PC-3 (cell line): ENCODE measurements at regions of chr1 and their contacts with region 1.

Region 1: DNA sequence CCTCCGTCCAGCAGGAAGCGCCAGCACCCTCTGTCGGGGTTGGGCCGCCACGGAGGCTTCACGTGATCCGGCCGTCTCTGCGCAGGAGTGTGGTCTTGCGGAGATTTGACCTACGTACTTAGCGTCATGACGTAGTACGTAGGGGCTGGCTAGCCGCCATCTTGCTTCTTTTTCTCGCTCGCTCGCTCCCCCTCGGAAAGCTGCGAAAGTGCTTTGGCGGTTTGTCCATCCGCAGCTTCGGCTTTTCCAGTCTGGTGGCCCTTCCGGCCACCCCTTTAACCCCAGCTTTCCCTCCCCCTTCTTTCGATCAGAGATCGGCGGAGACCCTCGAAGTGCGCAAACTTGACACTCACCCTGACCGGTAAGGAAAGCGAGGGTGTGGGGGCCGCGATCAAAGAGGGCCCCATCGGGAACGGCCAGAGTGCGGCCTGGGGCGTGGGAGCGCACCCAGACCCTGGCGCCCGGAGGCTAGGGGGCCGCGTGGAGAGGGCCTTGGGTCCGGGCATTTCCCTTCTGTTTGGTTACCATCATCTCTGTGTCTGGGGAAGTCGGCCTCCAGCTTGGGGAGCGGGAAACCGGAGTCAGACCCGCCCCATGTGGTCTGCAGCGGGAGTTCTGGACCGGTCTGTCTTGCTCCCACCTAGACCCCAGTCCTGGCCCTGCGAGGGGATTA is at the start of gene PRRC2C:
- DNase-seq: peak; percentile 100
- ATAC-seq: peak; percentile 95
- H3K4me3 ChIP-seq: peak within 1 kb of the TSS; percentile 82
- H3K27ac ChIP-seq: peak within 1 kb of the TSS; percentile 84
- H3K4me1 ChIP-seq: peaks cover 33% of the 10 kb centered on the region
- H3K27me3 ChIP-seq: no peaks in the 10 kb centered on the region
- CTCF ChIP-seq: no peak; the same call in 1 of the 2 replicates
- total RNA-seq, gene PRRC2C: 199 and 225 TPM in 2 replicates

Region 2: DNA sequence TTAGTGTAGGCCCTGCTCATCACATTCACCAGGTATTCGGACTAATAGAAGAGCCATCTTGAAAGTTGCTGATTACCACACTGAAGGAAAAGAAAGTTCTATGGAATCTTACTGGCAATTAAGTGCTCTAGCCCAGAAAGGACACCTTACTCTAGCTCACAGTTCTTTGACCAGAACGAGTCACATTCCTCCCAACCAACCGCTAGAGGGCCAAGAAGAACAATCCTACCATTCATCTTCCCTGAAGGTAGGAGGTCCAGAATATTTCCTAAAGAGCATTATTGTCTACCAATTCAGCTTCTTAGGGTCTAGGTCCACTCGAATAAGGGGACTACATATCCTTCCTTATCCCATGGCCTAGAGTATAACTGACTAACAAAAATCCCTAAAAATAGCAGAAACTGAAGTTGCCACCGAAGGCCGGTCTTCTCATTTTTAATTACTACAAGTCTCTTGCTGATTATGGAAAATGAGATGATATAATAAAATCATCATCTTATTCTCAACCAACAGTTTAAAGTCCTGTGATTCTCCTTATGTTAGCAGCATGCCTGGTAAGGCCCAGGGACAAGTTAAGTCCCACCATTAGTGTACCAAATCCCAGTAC is 239.9 kb before region 1 on chr1:
- CTCF ChIA-PET with region 1: no interaction called
- POLR2A ChIA-PET with region 1: no interaction called
- intact Hi-C with region 1: loop called (anchors 5 kb)
- DNase-seq: peak; percentile 82
- ATAC-seq: peak; percentile 99
- H3K4me3 ChIP-seq: no peak overlapping the region
- H3K27ac ChIP-seq: no peak overlapping the region
- H3K4me1 ChIP-seq: no peaks in the 10 kb centered on the region
- H3K27me3 ChIP-seq: peaks cover 48% of the 10 kb centered on the region
- CTCF ChIP-seq: peak; percentile 98

Region 3: GRCh38 chr1:171334024-171334640 is 151.4 kb before region 1 on chr1:
- CTCF ChIA-PET with region 1: no interaction called
- POLR2A ChIA-PET with region 1: no interaction called
- intact Hi-C with region 1: no loop called
- DNase-seq: no peak
- ATAC-seq: no peak
- H3K4me3 ChIP-seq: no peak overlapping the region
- H3K27ac ChIP-seq: no peak overlapping the region
- H3K4me1 ChIP-seq: no peaks in the 10 kb centered on the region
- H3K27me3 ChIP-seq: peaks cover 5% of the 10 kb centered on the region
- CTCF ChIP-seq: no peak

Region 4: DNA sequence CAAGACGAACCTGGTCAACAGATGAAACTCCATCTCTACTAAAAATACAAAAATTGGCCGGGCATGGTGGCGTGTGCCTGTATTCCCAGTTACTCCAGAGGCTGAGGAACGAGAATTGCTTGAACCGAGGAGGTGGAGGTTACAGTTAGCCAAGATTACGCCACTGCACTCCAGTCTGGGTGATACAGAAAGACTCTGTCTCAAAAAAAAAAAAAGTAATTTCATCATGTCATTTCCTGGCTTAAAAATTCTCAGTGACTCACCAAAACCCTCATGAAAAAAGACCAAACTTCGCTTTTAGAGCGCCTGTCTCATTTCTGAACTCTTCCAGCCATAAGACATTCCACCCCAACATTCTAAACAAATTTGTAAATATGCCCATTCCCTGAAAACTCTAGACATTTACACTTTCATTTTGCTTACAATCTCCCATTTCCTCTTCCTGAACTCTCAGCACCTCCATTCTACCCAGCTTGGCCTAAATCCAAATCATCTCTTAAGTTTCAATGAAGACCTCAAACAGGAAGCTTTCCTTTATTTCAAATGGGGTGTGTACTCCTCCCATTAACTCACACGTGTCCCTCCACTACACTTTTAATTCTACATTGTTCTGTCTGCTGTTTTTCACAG is 50.7 kb before region 1 on chr1:
- CTCF ChIA-PET with region 1: interaction called, 5 read pairs
- POLR2A ChIA-PET with region 1: no interaction called
- intact Hi-C with region 1: loop called (anchors 1 kb)
- DNase-seq: peak; percentile 92
- ATAC-seq: peak; percentile 19
- H3K4me3 ChIP-seq: peak overlapping the region; percentile 48
- H3K27ac ChIP-seq: peak overlapping the region; percentile 91
- H3K4me1 ChIP-seq: peaks cover 55% of the 10 kb centered on the region
- H3K27me3 ChIP-seq: no peaks in the 10 kb centered on the region
- CTCF ChIP-seq: no peak

Region 5: GRCh38 chr1:171468120-171469035 is 17.1 kb before region 1 on chr1:
- CTCF ChIA-PET with region 1: interaction called, 7 read pairs
- POLR2A ChIA-PET with region 1: no interaction called
- intact Hi-C with region 1: loop called (anchors 1 kb)
- DNase-seq: peak; percentile 69
- ATAC-seq: peak; percentile 94
- H3K4me3 ChIP-seq: no peak overlapping the region
- H3K27ac ChIP-seq: peak overlapping the region; percentile 51
- H3K4me1 ChIP-seq: peaks cover 16% of the 10 kb centered on the region
- H3K27me3 ChIP-seq: no peaks in the 10 kb centered on the region
- CTCF ChIP-seq: no peak

Region 6: DNA sequence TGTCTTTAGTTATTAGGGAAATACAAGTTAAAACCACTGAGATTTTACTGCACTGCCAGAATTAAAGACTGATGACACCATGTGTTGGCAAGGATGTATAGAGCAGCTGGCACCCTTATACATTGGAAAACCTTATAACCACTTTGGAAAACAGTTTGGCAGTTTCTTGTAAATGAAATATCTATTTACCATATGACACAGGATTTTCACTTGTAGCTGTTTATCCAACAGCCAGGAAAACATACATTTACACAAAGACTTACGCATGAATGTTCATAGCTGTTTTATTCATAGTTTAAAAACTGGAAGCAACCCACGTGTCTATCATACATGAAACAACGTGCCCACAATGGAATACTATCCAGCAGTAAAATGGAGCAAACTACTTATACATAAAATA is 45.2 kb after region 1 on chr1:
- CTCF ChIA-PET with region 1: interaction called, 4 read pairs
- POLR2A ChIA-PET with region 1: no interaction called
- intact Hi-C with region 1: loop called (anchors 5 kb)
- DNase-seq: no peak
- ATAC-seq: peak; percentile 30; the same call in 1 of the 2 replicates
- H3K4me3 ChIP-seq: no peak overlapping the region
- H3K27ac ChIP-seq: no peak overlapping the region
- H3K4me1 ChIP-seq: no peaks in the 10 kb centered on the region
- H3K27me3 ChIP-seq: no peaks in the 10 kb centered on the region
- CTCF ChIP-seq: no peak

Region 7: GRCh38 chr1:171781176-171781875 is 295.8 kb after region 1 on chr1 and contains the start of gene METTL13:
- CTCF ChIA-PET with region 1: no interaction called
- POLR2A ChIA-PET with region 1: no interaction called
- intact Hi-C with region 1: loop called (anchors 5 kb)
- DNase-seq: peak; percentile 100
- ATAC-seq: peak; percentile 97
- H3K4me3 ChIP-seq: peak within 1 kb of the TSS; percentile 75
- H3K27ac ChIP-seq: peak within 1 kb of the TSS; percentile 61
- H3K4me1 ChIP-seq: peaks cover 39% of the 10 kb centered on the region
- H3K27me3 ChIP-seq: no peaks in the 10 kb centered on the region
- CTCF ChIP-seq: no peak
- total RNA-seq, gene METTL13: 115 and 138 TPM in 2 replicates